PC-9 (cell line): ENCODE measurements at regions of chr7 and their contacts with region 1.

Region 1: GRCh38 chr7:8261711-8262695 is at the start of gene ICA1:
- DNase-seq: peak; percentile 72 to 89
- H3K4me3 ChIP-seq: peak within 1 kb of the TSS; percentile 99
- H3K27ac ChIP-seq: peak within 1 kb of the TSS; percentile 71
- H3K4me1 ChIP-seq: peaks cover 7% of the 10 kb centered on the region
- H3K27me3 ChIP-seq: no peaks in the 10 kb centered on the region
- CTCF ChIP-seq: no peak
- total RNA-seq, gene ICA1: 33.8 and 58.6 TPM in 2 replicates

Region 2: DNA sequence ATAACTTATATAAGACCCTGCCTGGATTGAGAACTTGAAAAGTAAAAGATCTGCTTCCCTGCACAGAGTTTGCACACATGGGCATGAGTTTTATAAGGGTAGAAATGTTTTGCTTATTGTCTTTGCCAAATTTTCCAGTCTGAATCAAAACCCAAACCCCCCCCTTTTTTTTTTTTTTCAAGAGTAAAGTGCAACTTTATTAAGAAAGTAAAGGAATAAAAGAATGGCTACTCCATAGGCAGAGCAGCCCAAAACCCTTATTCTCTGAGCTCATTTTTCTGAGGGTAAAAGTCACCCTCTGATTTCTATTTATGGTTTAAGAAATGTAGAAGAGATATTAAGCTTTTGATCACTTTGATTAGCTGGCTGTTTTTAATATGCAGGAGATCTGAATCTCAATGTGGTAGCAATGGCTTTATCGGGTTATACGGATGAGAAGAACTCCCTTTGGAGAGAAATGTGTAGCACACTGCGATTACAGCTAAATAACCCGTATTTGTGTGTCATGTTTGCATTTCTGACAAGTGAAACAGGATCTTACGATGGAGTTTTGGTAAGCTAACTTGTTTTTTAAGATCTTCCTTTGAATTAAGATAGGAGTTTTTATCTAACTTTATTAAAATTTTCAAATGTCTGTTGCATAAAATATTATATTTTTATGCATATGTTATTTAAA is 676.6 kb before region 1 on chr7:
- CTCF ChIA-PET with region 1: no interaction called
- POLR2A ChIA-PET with region 1: interaction called, 11 read pairs
- intact Hi-C with region 1: no loop called
- DNase-seq: no peak
- H3K4me3 ChIP-seq: no peak overlapping the region
- H3K27ac ChIP-seq: no peak overlapping the region
- H3K4me1 ChIP-seq: no peaks in the 10 kb centered on the region
- H3K27me3 ChIP-seq: no peaks in the 10 kb centered on the region
- CTCF ChIP-seq: no peak

Region 3: GRCh38 chr7:7962851-7963250 is 299.2 kb before region 1 on chr7:
- CTCF ChIA-PET with region 1: no interaction called
- POLR2A ChIA-PET with region 1: no interaction called
- intact Hi-C with region 1: no loop called
- DNase-seq: no peak
- H3K4me3 ChIP-seq: no peak overlapping the region
- H3K27ac ChIP-seq: no peak overlapping the region
- H3K4me1 ChIP-seq: peaks cover 17% of the 10 kb centered on the region
- H3K27me3 ChIP-seq: no peaks in the 10 kb centered on the region
- CTCF ChIP-seq: no peak

Region 4: DNA sequence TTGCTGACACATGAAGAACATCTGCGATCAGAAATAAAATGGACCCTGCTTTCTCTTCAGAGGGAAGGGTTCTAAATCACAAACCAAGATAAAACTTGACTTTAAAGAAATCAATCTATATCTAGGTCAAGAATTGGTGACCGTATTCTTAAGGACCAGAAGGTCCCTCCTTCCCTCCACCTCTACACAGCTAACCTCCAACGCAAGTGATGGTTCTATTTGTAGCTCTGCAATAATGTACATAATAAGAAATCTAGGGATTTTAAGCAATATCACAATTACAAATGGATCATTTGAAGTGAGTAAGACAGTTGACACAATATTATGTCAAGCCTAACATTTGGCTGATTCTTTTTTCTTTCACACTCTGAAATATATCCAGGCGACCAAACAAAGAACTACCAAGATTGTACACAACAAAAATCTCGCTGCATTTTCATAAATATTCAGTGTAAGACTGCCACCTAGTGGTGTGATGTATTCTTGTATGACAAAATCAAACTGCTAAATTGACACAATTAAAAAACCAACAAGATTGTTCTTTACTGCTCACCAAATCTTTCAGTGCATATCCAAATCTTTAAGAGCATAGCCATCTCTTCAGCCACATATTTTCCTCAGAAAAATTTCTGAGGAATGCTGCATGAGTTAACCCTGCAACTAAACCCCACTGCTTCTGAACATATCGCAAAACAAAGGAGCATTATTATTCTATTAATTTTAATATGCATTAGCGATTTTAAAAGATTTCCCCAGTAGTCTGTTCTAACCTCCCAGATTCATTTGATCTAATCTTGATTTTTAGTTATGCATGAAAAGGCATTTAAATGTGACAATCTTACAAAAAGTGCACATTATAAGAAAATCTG is 44.6 kb before region 1 on chr7:
- CTCF ChIA-PET with region 1: no interaction called
- POLR2A ChIA-PET with region 1: no interaction called
- intact Hi-C with region 1: no loop called
- DNase-seq: peak; percentile 8 to 59
- H3K4me3 ChIP-seq: no peak overlapping the region
- H3K27ac ChIP-seq: no peak overlapping the region
- H3K4me1 ChIP-seq: peaks cover 7% of the 10 kb centered on the region; the same call in 1 of the 2 replicates
- H3K27me3 ChIP-seq: no peaks in the 10 kb centered on the region
- CTCF ChIP-seq: peak; percentile 94

Region 5: DNA sequence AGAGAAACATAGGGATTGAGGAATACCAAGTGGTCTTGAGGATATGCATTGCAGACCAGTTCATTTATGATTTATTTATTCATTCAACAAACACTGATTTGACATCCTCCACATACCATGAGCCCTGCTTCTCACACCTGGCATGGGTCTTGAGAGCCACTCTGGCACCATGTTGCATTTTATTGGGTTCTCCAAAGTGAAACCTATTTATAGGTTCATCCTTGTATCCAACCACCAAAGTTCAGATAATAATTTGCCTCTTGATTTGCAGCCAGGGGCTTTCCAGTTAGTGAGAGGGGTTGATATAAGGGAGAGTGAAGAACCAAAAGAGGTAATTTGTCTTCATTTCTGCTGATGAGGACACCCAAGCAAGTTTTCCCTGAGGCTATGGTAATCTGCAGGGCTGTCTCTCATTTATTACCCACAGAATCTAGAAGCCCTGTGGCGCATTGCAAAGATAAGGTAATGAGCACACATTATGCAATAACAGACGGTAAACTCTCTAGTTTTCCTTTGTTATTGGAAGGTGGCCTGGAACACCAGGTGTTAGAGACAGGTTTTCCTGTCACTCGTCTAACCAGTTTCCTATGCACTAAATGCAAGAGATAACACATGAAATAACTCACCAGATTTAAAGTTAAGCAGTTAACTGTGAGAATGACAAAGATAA is 28.8 kb after region 1 on chr7:
- CTCF ChIA-PET with region 1: no interaction called
- POLR2A ChIA-PET with region 1: no interaction called
- intact Hi-C with region 1: loop called (anchors 2 kb)
- DNase-seq: peak; percentile 45 to 95
- H3K4me3 ChIP-seq: no peak overlapping the region
- H3K27ac ChIP-seq: no peak overlapping the region
- H3K4me1 ChIP-seq: peaks cover 21% of the 10 kb centered on the region
- H3K27me3 ChIP-seq: no peaks in the 10 kb centered on the region
- CTCF ChIP-seq: no peak